ENCODE measurements at regions of chr10 and their contacts with region 1.

Region 1: DNA sequence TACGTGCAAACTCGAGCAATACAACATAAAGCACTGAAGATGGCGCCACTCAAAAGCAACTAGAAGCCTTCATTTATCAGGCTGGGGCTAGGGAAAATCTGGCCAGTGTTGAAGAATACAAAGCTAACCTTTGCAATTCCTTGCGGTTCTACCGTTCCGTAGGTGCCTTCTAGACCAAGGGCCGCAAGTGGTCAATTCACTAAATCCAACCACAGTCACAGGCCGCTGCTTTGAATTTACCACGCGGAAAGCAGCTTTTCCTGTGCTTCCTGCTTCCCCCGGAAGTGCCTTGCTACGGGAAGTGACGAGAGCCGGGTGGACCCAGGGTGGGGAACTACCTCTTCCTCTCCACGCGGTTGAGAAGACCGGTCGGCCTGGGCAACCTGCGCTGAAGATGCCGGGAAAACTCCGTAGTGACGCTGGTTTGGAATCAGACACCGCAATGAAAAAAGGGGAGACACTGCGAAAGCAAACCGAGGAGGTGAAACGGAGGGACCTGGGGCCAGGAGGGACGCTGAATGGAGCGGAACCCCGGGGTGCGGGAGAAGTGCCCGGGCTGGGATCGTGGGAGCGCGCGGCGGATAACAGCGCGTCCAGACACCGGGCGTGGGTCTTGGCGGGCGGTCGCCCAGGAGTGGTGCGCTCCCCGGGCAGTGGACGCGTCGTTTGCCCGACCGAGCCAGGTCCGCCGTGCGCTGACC is at the start of gene DDX21:
- DNase-seq: peak; percentile 93 to 96 (median 95)
- H3K4me3 ChIP-seq: peak within 1 kb of the TSS; percentile 79 to 99 (median 94)
- H3K27ac ChIP-seq: peak within 1 kb of the TSS; percentile 86 to 94
- H3K4me1 ChIP-seq: peaks cover 9 to 30% (median 20%) of the 10 kb centered on the region in 4 experiments
- H3K27me3 ChIP-seq: no peaks in the 10 kb centered on the region

Region 2: DNA sequence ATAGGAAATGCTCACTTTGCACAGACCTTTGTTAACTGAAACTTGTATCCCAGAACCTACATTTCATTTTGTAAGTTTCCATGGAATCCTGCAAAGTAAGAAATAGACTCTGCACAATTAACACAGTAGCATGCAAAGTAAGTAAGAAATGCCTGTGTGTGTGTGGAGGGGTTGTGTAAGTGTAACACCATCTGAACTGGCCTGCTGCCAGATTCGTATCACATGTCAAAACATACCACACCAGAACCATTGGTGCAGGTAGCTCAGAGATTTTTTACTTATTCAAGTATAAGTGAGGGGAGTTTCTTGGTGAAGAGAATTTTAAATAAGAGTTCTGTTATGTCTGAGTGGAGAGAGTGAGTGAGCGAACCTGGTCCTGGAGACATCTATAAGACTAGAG is 17.9 kb before region 1 on chr10:
- CTCF ChIA-PET with region 1: interaction called, 16 read pairs
- POLR2A ChIA-PET with region 1: interaction called, 4 read pairs
- DNase-seq: no peak
- H3K4me3 ChIP-seq: no peak overlapping the region
- H3K27ac ChIP-seq: no peak overlapping the region
- H3K4me1 ChIP-seq: no peaks in the 10 kb centered on the region
- H3K27me3 ChIP-seq: no peaks in the 10 kb centered on the region

Measured in common myeloid progenitor, CD34-positive (primary cell).